Activated CD4-positive, alpha-beta T cell treated with anti-CD3 and anti-CD28 coated beads for 36 hours (primary cell): ENCODE measurements at regions of chr2 and their contacts with region 1.

Region 1: GRCh38 chr2:10072656-10073480 is 7.3 kb downstream of the CYS1 start:
- DNase-seq: peak; percentile 86
- ATAC-seq: peak; percentile 97
- H3K4me3 Mint-ChIP-seq: no peak overlapping the region
- H3K27ac Mint-ChIP-seq: no peak overlapping the region
- H3K4me1 Mint-ChIP-seq: no peaks in the 10 kb centered on the region
- H3K27me3 Mint-ChIP-seq: peaks cover 38% of the 10 kb centered on the region

Region 2: GRCh38 chr2:9897331-9897737 is 175.5 kb before region 1 on chr2:
- CTCF ChIA-PET with region 1: no interaction called
- POLR2A ChIA-PET with region 1: no interaction called
- intact Hi-C with region 1: no loop called
- DNase-seq: peak; percentile 90
- ATAC-seq: peak; percentile 98
- H3K4me3 Mint-ChIP-seq: no peak overlapping the region
- H3K27ac Mint-ChIP-seq: no peak overlapping the region
- H3K4me1 Mint-ChIP-seq: peaks cover 27% of the 10 kb centered on the region
- H3K27me3 Mint-ChIP-seq: no peaks in the 10 kb centered on the region

Region 3: GRCh38 chr2:10057231-10058107 is 15.4 kb before region 1 on chr2:
- CTCF ChIA-PET with region 1: interaction called, 31 read pairs
- POLR2A ChIA-PET with region 1: interaction called, 3 read pairs
- intact Hi-C with region 1: no loop called
- DNase-seq: peak; percentile 61
- ATAC-seq: peak; percentile 53
- H3K4me3 Mint-ChIP-seq: no peak overlapping the region
- H3K27ac Mint-ChIP-seq: no peak overlapping the region
- H3K4me1 Mint-ChIP-seq: peaks cover 5% of the 10 kb centered on the region
- H3K27me3 Mint-ChIP-seq: peaks cover 2% of the 10 kb centered on the region

Region 4: GRCh38 chr2:10083692-10084181 is 10.9 kb after region 1 on chr2:
- CTCF ChIA-PET with region 1: interaction called, 42 read pairs
- POLR2A ChIA-PET with region 1: no interaction called
- intact Hi-C with region 1: no loop called
- DNase-seq: no peak
- ATAC-seq: no peak
- H3K4me3 Mint-ChIP-seq: no peak overlapping the region
- H3K27ac Mint-ChIP-seq: no peak overlapping the region
- H3K4me1 Mint-ChIP-seq: peaks cover 12% of the 10 kb centered on the region
- H3K27me3 Mint-ChIP-seq: peaks cover 51% of the 10 kb centered on the region

Region 5: GRCh38 chr2:10091182-10091888 is 18.5 kb after region 1 on chr2:
- CTCF ChIA-PET with region 1: interaction called, 61 read pairs
- POLR2A ChIA-PET with region 1: interaction called, 3 read pairs
- intact Hi-C with region 1: no loop called
- DNase-seq: peak; percentile 54
- ATAC-seq: peak; percentile 52
- H3K4me3 Mint-ChIP-seq: peak overlapping the region; percentile 31
- H3K27ac Mint-ChIP-seq: no peak overlapping the region
- H3K4me1 Mint-ChIP-seq: peaks cover 3% of the 10 kb centered on the region
- H3K27me3 Mint-ChIP-seq: peaks cover 46% of the 10 kb centered on the region

Region 6: DNA sequence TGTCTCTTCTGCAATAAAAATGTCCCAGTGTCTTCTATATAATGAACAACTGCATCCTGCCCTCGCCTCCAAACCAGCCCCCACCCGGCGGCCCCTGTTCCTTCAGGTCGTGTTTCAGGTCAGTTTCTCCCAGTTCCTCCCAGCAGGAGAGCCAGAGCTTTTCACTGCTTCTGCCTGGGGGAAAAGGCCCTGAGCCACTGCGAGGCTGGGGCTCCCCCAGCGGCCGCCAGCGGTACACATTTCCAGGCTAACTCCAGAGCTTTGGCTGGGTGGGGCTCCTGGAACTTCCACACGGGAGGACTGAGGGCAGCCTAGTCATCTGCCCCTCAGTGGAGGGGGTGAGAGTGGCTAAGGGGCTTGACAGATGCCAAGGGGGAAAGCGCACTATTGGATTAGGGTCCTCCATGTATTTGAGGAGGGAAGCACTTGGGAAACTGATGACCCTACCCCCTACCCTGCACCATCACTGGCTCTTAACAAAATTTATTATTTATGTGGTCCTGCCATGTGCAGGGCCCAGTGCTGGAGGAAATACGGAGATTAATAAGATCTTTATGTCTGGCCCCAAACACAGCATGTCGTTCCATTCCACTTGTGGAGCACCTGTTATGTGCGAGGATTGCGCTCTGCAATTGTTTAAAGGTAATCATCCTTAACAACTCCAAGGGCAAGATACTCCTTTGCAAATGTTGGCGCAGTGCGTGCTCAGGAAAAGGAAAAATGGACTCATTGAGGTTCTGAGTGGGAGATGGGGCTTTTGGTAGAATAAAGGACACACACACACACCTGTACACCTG is 24.7 kb after region 1 on chr2:
- CTCF ChIA-PET with region 1: interaction called, 61 read pairs
- POLR2A ChIA-PET with region 1: interaction called, 6 read pairs
- intact Hi-C with region 1: loop called (anchors 1 kb)
- DNase-seq: peak; percentile 59
- ATAC-seq: peak; percentile 83
- H3K4me3 Mint-ChIP-seq: no peak overlapping the region
- H3K27ac Mint-ChIP-seq: no peak overlapping the region
- H3K4me1 Mint-ChIP-seq: no peaks in the 10 kb centered on the region
- H3K27me3 Mint-ChIP-seq: peaks cover 24% of the 10 kb centered on the region

Region 7: DNA sequence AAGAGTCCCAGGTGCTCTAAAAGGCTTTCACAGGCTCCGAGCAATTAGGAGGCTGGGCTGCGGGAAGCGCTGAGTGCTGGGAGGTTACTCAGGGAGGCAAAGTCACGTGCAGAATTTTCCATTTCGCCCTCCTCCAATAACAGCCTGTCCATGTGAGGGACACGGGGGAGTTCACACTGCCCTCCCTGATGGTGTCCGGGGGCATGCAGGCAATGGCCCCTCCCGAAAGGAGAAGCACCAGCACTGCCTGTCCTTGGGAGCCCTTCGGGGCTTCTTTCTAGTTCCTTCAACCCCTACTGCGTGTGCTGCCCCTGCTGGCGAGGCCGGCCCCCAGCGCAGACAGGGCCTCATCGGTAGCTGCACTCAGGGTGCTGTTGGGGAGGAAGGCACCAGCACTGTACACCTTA is 166.7 kb after region 1 on chr2:
- CTCF ChIA-PET with region 1: no interaction called
- POLR2A ChIA-PET with region 1: no interaction called
- intact Hi-C with region 1: no loop called
- DNase-seq: no peak
- ATAC-seq: no peak
- H3K4me3 Mint-ChIP-seq: no peak overlapping the region
- H3K27ac Mint-ChIP-seq: no peak overlapping the region
- H3K4me1 Mint-ChIP-seq: no peaks in the 10 kb centered on the region
- H3K27me3 Mint-ChIP-seq: no peaks in the 10 kb centered on the region

Region 8: GRCh38 chr2:10668402-10669012 is 595.6 kb after region 1 on chr2:
- CTCF ChIA-PET with region 1: no interaction called
- POLR2A ChIA-PET with region 1: no interaction called
- intact Hi-C with region 1: loop called in 1 of 2 experiments (anchors 2 kb)
- DNase-seq: peak; percentile 23
- ATAC-seq: peak; percentile 70
- H3K4me3 Mint-ChIP-seq: no peak overlapping the region
- H3K27ac Mint-ChIP-seq: no peak overlapping the region
- H3K4me1 Mint-ChIP-seq: no peaks in the 10 kb centered on the region
- H3K27me3 Mint-ChIP-seq: no peaks in the 10 kb centered on the region